Activated T-helper 2 cell treated with anti-CD3 and anti-CD28 coated beads, Interferon-gamma antibody, Interleukin-2, Interleukin-4, amounts not matched to agents 10 μg/mL and 5 μg/mL and 100 μg/mL, durations not matched to agents 14 hours and 24 hours and 36 hours (primary cell): ENCODE measurements at regions of chr14 and their contacts with region 1.

Region 1: DNA sequence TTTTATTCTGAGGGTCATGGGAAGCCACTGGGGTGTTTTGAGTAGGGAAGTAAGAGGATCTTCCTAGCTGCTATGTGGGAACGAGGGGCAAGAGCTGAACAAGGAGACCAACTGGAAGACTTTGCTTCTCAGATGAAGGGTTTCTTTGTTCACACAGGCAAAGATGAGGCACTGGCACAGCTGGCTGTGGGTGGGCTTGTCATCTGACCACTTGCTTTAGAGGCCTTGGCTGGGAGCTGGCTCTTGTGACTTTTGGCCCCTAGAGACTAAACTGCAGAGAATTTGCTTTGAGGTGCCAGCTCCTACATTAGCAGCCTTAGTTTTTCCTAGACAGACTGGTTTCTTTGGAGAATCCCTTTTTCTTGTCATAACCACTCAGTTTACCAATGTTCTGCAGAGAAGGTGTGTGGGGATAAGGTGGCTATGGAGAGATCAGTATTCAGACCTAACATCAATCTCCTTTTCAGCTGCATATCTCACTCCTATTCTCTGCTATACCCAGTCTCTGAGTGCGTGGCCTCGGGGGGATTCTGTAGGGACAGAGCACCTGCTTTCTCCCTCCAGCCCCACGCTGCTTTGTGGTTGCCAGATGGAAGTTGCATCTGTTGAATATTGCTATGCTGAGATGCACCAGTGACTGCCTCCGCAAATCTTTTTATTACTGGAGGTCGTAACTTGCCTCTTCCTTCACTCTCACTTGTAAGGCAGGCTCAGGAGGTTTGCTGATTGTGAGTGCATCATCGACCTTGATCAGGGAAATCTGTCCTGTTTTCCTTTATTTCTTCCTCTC is 12.7 kb downstream of the PPP2R5C start:
- DNase-seq: no peak
- H3K4me3 Mint-ChIP-seq: no peak overlapping the region
- H3K27ac Mint-ChIP-seq: no peak overlapping the region
- H3K4me1 Mint-ChIP-seq: peaks cover 12% of the 10 kb centered on the region
- H3K27me3 Mint-ChIP-seq: peaks cover 2% of the 10 kb centered on the region

Region 2: GRCh38 chr14:101843665-101844064 is 69.5 kb after region 1 on chr14:
- intact Hi-C with region 1: loop called (anchors 2 kb)
- DNase-seq: peak; percentile 53
- H3K4me3 Mint-ChIP-seq: no peak overlapping the region
- H3K27ac Mint-ChIP-seq: peak overlapping the region; percentile 60
- H3K4me1 Mint-ChIP-seq: peaks cover 74% of the 10 kb centered on the region
- H3K27me3 Mint-ChIP-seq: no peaks in the 10 kb centered on the region